Posterior cingulate gyrus (tissue), 11 donors: ENCODE measurements at regions of chr4 and their contacts with region 1.

Region 1: DNA sequence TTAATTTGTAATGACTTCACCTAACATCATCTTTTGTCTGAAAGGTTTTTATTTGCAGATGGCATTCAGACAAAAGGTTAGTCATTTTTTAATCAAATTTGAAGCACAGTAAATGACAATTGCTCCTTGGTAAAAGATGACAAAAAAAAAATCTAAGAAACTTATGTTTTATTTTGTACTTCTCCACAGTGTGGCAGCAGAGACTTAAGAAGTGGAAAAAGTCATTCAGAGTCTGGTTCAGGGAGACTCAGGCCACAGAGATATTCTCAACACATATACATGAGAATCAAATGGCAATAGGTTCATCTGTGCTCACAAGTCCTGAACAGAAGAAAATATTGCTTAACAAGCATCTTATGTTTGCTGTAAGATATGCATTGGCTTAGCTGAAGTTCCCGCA is 436.2 kb downstream of the KCNIP4 start:
- DNase-seq: no peak

Region 2: DNA sequence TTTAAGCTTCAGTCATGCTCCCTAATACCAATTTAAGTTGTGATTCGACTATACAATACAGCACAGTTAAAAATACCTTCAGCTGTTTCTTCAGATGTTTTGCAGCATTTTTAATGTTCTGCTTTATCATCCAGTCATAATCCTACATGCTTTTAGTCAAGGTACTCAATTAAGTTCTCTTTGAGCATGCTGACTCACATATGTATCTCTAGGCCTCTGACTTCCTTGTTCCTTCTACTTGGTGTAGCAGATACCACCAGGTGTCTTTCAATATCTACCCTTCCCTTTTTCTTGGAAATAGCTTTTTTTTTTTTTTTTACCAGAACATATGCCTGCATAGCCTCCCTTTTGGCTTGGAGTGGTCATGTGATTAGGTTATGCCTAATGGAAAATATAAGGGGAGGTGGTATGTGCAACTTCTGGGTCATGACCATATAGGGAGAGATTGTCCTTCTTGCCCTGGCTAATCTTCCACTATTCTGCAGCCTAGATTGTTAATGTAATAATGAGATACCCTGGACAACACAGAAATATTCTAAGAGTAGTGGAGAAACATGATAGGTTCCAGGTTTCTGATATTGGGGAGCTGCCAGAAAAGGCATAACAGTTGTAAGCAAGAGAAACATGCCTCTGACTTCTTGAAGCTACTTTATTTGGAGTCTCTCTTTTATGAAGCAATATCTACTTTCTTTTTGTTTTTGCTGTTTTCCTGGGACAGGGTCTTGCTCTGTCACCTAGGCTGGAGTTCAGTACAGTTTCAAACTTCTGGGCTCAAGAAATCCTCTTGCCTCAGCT is 1997.9 kb before region 1 on chr4:
- intact Hi-C with region 1: no loop called
- DNase-seq: no peak

Region 3: GRCh38 chr4:21768349-21769310 is 256.3 kb after region 1 on chr4:
- intact Hi-C with region 1: loop called (anchors 1 kb)
- DNase-seq: peak in 1 of 10 donors; percentile 21

Region 4: GRCh38 chr4:22389240-22389870 is 877.0 kb after region 1 on chr4:
- intact Hi-C with region 1: loop called (anchors 10 kb)
- DNase-seq: peak; percentile 28 to 90 (median 50)